ENCODE measurements at regions of chr2 and their contacts with region 1.

Region 1: GRCh38 chr2:113273027-113273551 is 5.6 kb downstream of the PAX8 start:
- DNase-seq: no peak
- H3K4me3 Mint-ChIP-seq: no peak overlapping the region
- H3K27ac Mint-ChIP-seq: no peak overlapping the region
- H3K4me1 Mint-ChIP-seq: peaks cover 13% of the 10 kb centered on the region
- H3K27me3 Mint-ChIP-seq: peaks cover 76% of the 10 kb centered on the region

Region 2: GRCh38 chr2:113203901-113204519 is 69.1 kb before region 1 on chr2:
- intact Hi-C with region 1: loop called (anchors 5 kb)
- DNase-seq: peak; percentile 69
- H3K4me3 Mint-ChIP-seq: no peak overlapping the region
- H3K27ac Mint-ChIP-seq: peak overlapping the region; percentile 58
- H3K4me1 Mint-ChIP-seq: peaks cover 8% of the 10 kb centered on the region
- H3K27me3 Mint-ChIP-seq: no peaks in the 10 kb centered on the region